PC-9 (cell line): ENCODE measurements at regions of chr17 and their contacts with region 1.

Region 1: DNA sequence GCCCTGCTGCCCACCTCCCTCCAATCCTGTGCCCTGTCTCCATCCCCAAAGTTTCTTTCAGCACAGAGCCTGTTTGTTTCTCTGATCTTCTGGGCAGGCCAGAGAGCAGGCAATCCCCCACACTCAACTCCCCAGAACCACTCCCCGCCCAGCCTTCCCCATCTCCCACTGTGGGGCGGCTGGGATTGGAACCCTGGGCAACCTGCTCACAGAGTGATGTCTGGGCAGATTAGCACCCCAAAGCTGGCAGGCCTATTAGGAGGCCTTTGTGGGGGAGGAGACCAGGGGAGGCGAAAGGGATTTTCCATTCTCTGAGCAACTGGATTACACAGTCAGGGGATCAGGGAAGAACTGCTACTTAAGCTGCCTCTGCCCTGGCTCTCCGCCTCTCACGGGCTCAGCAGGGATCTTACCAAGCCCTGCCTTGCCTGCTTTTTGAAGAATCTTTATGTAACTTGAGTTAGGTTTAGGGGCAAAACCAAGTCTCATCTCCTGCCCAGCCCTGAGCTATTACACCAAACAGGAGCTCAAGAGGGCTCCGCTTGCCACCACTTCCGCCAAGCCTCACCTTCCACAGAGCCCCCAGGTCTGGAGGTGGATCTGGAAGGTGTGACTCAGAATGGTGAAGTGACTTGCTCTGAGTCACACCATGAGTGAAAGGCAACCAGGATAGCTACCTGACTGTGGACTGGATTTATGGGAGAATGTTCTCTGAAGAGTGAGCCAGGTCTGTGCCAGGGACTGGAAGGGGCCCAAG is 16.0 kb upstream of the LHX1 start:
- DNase-seq: peak; percentile 85 to 99
- H3K4me3 ChIP-seq: peak overlapping the region; percentile 45
- H3K27ac ChIP-seq: peak overlapping the region; percentile 99
- H3K4me1 ChIP-seq: peaks cover 93% of the 10 kb centered on the region
- H3K27me3 ChIP-seq: no peaks in the 10 kb centered on the region
- CTCF ChIP-seq: no peak

Region 2: DNA sequence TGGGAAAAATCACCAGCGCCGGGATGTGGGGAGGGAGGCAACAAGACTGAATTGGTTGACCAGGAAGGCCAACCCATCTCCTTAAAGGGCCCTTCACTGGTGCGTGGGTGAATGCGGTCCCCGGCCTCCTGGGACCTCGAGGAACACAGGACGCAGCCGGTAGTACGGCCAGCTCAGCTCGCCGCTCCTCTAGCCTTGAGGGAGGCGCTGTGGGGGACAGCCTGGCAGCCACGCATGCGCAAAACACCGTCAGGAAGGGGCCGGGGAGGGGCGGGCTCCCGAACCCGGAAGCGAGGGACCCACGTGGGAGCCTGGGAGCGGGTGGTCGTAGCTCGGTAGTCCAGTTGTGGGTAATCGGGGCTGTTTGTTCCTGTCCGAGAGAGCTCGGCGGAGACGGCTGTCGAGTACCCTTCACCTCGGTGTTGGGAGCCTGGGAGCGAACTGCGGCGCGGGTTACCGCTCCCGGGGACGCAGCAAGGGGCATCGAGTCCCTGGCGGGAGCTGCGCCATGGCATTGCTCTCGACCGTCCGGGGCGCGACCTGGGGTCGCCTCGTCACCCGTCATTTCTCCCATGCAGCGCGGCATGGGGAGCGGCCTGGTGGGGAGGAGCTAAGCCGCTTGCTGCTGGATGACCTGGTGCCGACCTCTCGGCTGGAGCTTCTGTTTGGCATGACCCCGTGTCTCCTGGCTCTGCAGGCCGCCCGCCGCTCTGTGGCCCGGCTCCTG is 319.8 kb before region 1 on chr17 and contains the start of gene MRM1:
- CTCF ChIA-PET with region 1: no interaction called
- POLR2A ChIA-PET with region 1: interaction called, 13 read pairs
- intact Hi-C with region 1: no loop called
- DNase-seq: peak; percentile 86 to 90
- H3K4me3 ChIP-seq: peak within 1 kb of the TSS; percentile 77
- H3K27ac ChIP-seq: peak within 1 kb of the TSS; percentile 65
- H3K4me1 ChIP-seq: peaks cover 8% of the 10 kb centered on the region; the same call in 1 of the 2 replicates
- H3K27me3 ChIP-seq: no peaks in the 10 kb centered on the region
- CTCF ChIP-seq: no peak
- total RNA-seq, gene MRM1: 9.6 and 10.9 TPM in 2 replicates

Region 3: DNA sequence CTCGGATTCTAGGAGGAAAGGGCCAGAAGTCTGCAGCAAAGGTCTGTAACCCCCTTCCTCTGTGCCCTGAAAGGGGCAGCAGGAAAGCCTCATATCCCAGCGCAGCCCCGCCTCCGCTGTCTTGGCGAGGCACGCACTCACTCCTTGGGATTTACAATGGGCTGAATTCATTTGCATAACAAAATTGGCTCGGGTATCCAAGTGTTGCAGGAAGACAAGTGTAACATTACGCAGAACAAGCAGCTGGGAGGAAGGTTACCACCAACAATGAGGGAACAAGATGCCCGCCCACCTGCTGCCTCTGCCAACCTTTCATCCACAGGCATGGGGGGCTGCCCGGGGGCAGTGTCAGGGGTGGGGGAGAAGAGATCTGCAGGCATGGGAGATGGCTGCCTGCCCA is 189.5 kb before region 1 on chr17:
- CTCF ChIA-PET with region 1: no interaction called
- POLR2A ChIA-PET with region 1: no interaction called
- intact Hi-C with region 1: loop called (anchors 2 kb)
- DNase-seq: no peak
- H3K4me3 ChIP-seq: no peak overlapping the region
- H3K27ac ChIP-seq: no peak overlapping the region
- H3K4me1 ChIP-seq: no peaks in the 10 kb centered on the region
- H3K27me3 ChIP-seq: peaks cover 54% of the 10 kb centered on the region
- CTCF ChIP-seq: no peak

Region 4: GRCh38 chr17:36892112-36892838 is 29.0 kb before region 1 on chr17:
- CTCF ChIA-PET with region 1: interaction called, 10 read pairs
- POLR2A ChIA-PET with region 1: no interaction called
- intact Hi-C with region 1: no loop called
- DNase-seq: no peak
- H3K4me3 ChIP-seq: no peak overlapping the region
- H3K27ac ChIP-seq: no peak overlapping the region
- H3K4me1 ChIP-seq: no peaks in the 10 kb centered on the region
- H3K27me3 ChIP-seq: no peaks in the 10 kb centered on the region
- CTCF ChIP-seq: no peak

Region 5: DNA sequence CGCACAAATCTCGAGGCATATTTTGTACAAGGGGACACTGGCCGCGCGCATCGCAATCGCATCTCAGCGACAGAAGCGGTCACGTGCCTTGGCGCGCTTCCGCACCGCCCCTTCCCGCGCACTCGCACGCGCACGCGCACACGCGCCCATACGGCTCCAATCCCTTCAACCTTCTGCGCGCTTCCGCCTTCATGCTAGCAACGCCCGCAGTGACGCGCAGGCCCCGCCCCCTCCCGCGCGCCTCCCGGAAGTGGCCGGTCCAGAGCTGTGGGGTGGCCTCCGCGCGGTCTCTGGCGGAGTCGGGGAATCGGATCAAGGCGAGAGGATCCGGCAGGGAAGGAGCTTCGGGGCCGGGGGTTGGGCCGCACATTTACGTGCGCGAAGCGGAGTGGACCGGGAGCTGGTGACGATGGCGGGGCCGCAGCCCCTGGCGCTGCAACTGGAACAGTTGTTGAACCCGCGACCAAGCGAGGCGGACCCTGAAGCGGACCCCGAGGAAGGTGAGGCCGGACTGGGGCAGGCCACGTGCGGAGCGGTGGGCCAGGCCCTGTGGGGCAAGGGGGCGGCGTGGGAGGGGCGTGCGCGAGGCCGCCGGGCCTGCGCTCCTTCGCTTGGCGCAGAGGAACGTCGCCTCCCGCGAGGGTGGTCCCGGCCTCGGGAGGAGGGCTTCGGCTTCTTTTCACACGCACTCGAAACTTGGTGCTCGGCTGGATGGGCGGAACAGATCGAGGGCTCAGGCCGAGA is 27.6 kb after region 1 on chr17 and contains the start of gene AATF:
- CTCF ChIA-PET with region 1: no interaction called
- POLR2A ChIA-PET with region 1: interaction called, 8 read pairs
- intact Hi-C with region 1: loop called (anchors 1 kb)
- DNase-seq: peak; percentile 86 to 96
- H3K4me3 ChIP-seq: peak within 1 kb of the TSS; percentile 88
- H3K27ac ChIP-seq: peak within 1 kb of the TSS; percentile 82
- H3K4me1 ChIP-seq: peaks cover 33% of the 10 kb centered on the region; the same call in 1 of the 2 replicates
- H3K27me3 ChIP-seq: no peaks in the 10 kb centered on the region
- CTCF ChIP-seq: no peak
- total RNA-seq, gene AATF: 71.4 and 79.6 TPM in 2 replicates